Activated CD4-positive, alpha-beta T cell treated with anti-CD3 and anti-CD28 coated beads for 36 hours (primary cell): ENCODE measurements at regions of chr11 and their contacts with region 1.

Region 1: GRCh38 chr11:96648991-96649390 is 259.2 kb downstream of the JRKL start:
- DNase-seq: no peak
- ATAC-seq: no peak
- H3K4me3 Mint-ChIP-seq: no peak overlapping the region
- H3K27ac Mint-ChIP-seq: no peak overlapping the region
- H3K4me1 Mint-ChIP-seq: no peaks in the 10 kb centered on the region
- H3K27me3 Mint-ChIP-seq: no peaks in the 10 kb centered on the region

Region 2: DNA sequence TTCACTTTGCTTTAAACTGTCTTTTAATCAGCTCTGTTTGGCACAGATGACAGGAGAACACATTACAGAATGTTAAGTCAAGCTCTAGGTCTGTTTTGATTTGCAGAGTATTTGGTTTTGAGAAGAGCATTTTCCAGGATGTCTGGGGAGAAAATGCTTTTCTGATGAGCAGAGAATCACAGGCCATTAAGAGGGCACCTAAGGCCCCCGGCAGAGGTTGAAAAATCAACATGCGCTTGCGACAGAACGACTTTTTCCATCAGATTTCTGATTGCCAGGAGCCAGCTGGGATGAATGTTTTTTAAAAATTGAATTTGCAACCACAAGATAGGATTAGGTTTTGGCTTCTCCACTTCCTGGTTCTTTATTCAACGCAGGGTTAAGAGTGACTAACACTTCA is 45.3 kb after region 1 on chr11:
- CTCF ChIA-PET with region 1: no interaction called
- POLR2A ChIA-PET with region 1: no interaction called
- intact Hi-C with region 1: loop called in 1 of 2 experiments (anchors 1 kb)
- DNase-seq: no peak
- ATAC-seq: no peak
- H3K4me3 Mint-ChIP-seq: no peak overlapping the region
- H3K27ac Mint-ChIP-seq: no peak overlapping the region
- H3K4me1 Mint-ChIP-seq: no peaks in the 10 kb centered on the region
- H3K27me3 Mint-ChIP-seq: no peaks in the 10 kb centered on the region